ENCODE measurements at regions of chr15 and their contacts with region 1.

Region 1: DNA sequence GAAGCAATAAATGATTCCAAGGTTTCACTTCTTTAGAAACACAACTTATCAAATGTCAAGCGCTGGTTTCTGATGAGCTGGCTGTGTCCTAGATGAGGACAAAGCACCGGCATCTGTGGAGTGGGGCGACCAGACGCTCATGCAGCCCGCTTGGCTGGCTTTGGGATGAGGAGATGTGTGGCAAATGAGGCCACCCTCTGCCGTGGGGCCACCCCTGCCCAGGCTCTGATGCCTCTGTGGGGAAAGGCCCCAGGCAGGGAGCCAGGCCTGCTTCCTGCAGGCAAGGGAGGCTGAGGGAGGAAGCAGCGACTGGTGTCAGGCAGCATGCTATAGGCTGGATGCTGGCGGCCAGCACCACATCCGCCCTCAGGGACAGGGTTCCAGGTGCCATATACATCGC is 102.9 kb downstream of the HERC2 start:
- DNase-seq: no peak
- ATAC-seq: no peak
- H3K4me3 ChIP-seq: no peak overlapping the region
- H3K27ac ChIP-seq: no peak overlapping the region
- H3K4me1 ChIP-seq: no peaks in the 10 kb centered on the region
- H3K27me3 ChIP-seq: no peaks in the 10 kb centered on the region
- CTCF ChIP-seq: no peak
- POLR2A ChIP-seq: no peak

Region 2: GRCh38 chr15:28184166-28184565 is 35.0 kb before region 1 on chr15:
- intact Hi-C with region 1: loop called in 1 of 10 experiments (anchors 5 kb)
- DNase-seq: no peak
- ATAC-seq: no peak
- H3K4me3 ChIP-seq: no peak overlapping the region
- H3K27ac ChIP-seq: no peak overlapping the region
- H3K4me1 ChIP-seq: peaks cover 0 to 15% (median 2%) of the 10 kb centered on the region in 12 donors
- H3K27me3 ChIP-seq: no peaks in the 10 kb centered on the region
- CTCF ChIP-seq: no peak
- POLR2A ChIP-seq: no peak

Region 3: DNA sequence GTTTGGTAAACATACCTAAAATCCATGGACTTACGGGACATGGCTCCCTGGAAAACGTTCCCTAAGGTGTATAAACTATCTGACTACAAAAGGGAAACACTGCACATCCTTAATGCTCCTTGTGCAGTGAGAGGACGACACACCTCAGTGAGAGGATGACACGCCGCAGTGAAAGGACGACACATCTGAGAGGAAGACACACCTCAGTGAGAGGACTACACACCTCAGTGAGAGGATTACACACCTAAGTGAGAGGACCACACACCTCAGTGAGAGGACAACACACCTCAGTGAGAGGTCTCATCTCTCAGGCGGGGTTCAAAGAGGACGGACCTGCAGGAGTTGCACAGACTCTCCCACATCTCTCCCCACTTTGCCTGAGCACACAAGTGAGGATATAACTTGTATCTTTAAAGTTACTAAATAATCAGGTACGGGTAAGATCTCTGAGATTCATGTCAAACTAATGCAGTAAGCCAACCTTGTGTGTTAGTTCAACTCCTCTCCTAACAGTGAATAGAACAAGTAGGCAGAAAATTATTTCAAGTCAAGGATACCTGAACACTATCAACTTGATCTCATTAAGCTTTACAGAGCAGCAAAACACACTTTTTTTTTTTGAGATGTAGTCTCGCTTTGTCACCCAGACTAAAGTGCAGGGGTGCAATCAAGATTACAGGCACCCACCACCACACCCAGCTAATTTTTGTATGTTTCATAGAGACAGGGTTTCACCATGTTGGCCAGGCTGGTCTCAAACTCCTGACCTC is 70.8 kb after region 1 on chr15:
- intact Hi-C with region 1: no loop called
- DNase-seq: no peak
- ATAC-seq: peak in 3 of 4 donors; percentile 11 to 50 (median 41)
- H3K4me3 ChIP-seq: no peak overlapping the region
- H3K27ac ChIP-seq: peak overlapping the region in 2 of 12 donors; percentile 19 to 32
- H3K4me1 ChIP-seq: peaks cover 0 to 21% (median 10%) of the 10 kb centered on the region in 12 donors
- H3K27me3 ChIP-seq: no peaks in the 10 kb centered on the region
- CTCF ChIP-seq: no peak
- POLR2A ChIP-seq: no peak

Measured in heart left ventricle (tissue), 16 donors.